GM12878 (cell line): ENCODE measurements at regions of chr11 and their contacts with region 1.

Region 1: DNA sequence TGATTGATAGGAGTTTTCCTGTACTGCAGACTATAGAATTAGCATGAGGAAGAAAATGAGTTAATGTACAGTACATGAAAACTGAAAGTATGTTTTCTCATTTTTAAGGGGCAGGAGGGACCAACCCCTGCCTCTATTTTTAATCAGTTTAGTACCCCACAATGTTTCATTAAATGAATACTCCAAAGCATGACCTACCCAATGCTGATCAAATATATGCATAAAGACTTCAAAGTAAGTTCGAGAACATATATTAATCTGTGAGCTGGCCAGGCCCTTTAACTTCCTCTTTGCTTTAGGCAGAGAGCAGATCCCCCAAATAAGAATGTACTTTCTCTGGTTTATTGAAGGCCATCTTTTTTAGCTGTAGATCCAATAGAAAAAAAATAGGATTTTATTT is 161.0 kb downstream of the FCHSD2 start:
- DNase-seq: no peak
- ATAC-seq: peak; percentile 72
- H3K4me3 ChIP-seq: no peak overlapping the region
- H3K27ac ChIP-seq: peak overlapping the region; percentile 50
- H3K4me1 ChIP-seq: peaks cover 13% of the 10 kb centered on the region; the same call in 1 of the 2 replicates
- H3K27me3 ChIP-seq: no peaks in the 10 kb centered on the region
- CTCF ChIP-seq: no peak
- EP300 ChIP-seq: no peak
- POLR2A ChIP-seq: no peak
- RAD21 ChIP-seq: no peak

Region 2: DNA sequence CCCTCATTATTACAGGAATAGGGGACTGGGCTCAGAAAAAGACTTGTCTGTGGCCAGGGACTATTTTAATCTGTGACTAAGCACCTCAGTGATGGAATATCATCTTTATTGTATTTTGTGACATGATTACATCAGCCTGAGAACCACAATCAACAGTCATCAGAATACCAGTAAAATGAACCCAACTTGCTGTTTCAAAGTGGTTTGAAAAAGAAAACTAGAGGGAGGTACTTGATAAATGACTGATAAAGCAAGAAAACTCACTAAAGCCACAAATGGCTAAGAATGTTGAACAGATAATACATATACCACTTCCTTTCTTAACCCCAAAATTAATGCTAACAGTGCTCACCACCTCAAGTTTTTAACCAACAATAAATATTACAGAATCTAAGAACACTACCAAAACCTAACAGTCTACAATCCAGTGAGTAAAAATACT is 11.2 kb before region 1 on chr11:
- CTCF ChIA-PET with region 1: interaction called, 12 read pairs
- POLR2A ChIA-PET with region 1: interaction called, 3 read pairs
- RAD21 ChIA-PET with region 1: interaction called, 6 read pairs
- SMC1A ChIA-PET with region 1: interaction called, 24 read pairs
- in situ Hi-C with region 1: no loop called
- intact Hi-C with region 1: no loop called
- DNase-seq: peak; percentile 82
- ATAC-seq: peak; percentile 95
- H3K4me3 ChIP-seq: 0 out of 2 replicates have a peak overlapping the region, but pooled peaks have one; percentile 1
- H3K27ac ChIP-seq: peak overlapping the region; percentile 81
- H3K4me1 ChIP-seq: peaks cover 28% of the 10 kb centered on the region
- H3K27me3 ChIP-seq: no peaks in the 10 kb centered on the region
- CTCF ChIP-seq: no peak
- EP300 ChIP-seq: peak; percentile 82
- POLR2A ChIP-seq: no peak
- RAD21 ChIP-seq: peak; percentile 2; the same call in 1 of the 2 replicates

Region 3: GRCh38 chr11:72996959-72997358 is 15.9 kb after region 1 on chr11:
- CTCF ChIA-PET with region 1: no interaction called
- POLR2A ChIA-PET with region 1: no interaction called
- RAD21 ChIA-PET with region 1: interaction called, 3 read pairs
- SMC1A ChIA-PET with region 1: interaction called, 19 read pairs
- in situ Hi-C with region 1: no loop called
- intact Hi-C with region 1: no loop called
- DNase-seq: no peak
- ATAC-seq: peak; percentile 23; the same call in 2 of the 3 replicates
- H3K4me3 ChIP-seq: peak overlapping the region; percentile 2; the same call in 1 of the 2 replicates
- H3K27ac ChIP-seq: 0 out of 2 replicates have a peak overlapping the region, but pooled peaks have one; percentile 30
- H3K4me1 ChIP-seq: peaks cover 4% of the 10 kb centered on the region
- H3K27me3 ChIP-seq: no peaks in the 10 kb centered on the region
- CTCF ChIP-seq: no peak
- EP300 ChIP-seq: no peak
- POLR2A ChIP-seq: no peak
- RAD21 ChIP-seq: no peak

Region 4: DNA sequence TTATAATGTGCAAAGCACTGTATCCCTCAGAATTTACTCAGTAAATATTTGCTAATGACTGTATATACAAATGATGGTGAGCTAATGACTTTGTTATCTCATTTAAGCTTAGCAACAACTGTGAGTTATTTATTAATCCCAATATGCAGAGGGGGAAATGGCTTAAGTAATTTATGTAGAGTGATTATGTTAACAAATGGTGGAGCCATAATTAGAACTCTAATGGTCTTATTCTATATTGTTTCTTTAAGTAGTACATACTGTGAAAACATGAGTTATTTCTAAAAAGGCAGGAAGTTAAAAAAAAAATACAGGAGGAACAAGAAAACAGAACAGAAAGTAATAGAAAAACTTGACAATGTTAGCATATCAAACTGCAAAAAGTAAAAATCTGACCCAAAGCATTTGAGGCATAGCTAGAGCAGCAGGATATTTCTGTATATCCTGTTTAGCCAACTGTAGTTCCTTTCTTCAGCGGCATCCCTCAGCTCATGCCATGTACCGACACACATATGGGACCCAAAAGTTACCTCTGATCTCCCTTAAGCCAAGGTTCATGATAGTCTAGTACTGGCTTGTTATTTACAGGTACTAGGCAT is 66.8 kb after region 1 on chr11:
- CTCF ChIA-PET with region 1: interaction called, 4 read pairs
- POLR2A ChIA-PET with region 1: no interaction called
- RAD21 ChIA-PET with region 1: no interaction called
- SMC1A ChIA-PET with region 1: interaction called, 13 read pairs
- in situ Hi-C with region 1: no loop called
- intact Hi-C with region 1: no loop called
- DNase-seq: peak; percentile 88
- ATAC-seq: peak; percentile 89
- H3K4me3 ChIP-seq: peak overlapping the region; percentile 40; the same call in 1 of the 2 replicates
- H3K27ac ChIP-seq: peak overlapping the region; percentile 95
- H3K4me1 ChIP-seq: peaks cover 44% of the 10 kb centered on the region
- H3K27me3 ChIP-seq: no peaks in the 10 kb centered on the region
- CTCF ChIP-seq: no peak
- EP300 ChIP-seq: peak; percentile 11 to 70; a peak in 1 of 4 replicates
- POLR2A ChIP-seq: 0 out of 2 replicates have a peak, but pooled peaks have one; percentile 29
- RAD21 ChIP-seq: 0 out of 2 replicates have a peak, but pooled peaks have one; percentile 7

Region 5: DNA sequence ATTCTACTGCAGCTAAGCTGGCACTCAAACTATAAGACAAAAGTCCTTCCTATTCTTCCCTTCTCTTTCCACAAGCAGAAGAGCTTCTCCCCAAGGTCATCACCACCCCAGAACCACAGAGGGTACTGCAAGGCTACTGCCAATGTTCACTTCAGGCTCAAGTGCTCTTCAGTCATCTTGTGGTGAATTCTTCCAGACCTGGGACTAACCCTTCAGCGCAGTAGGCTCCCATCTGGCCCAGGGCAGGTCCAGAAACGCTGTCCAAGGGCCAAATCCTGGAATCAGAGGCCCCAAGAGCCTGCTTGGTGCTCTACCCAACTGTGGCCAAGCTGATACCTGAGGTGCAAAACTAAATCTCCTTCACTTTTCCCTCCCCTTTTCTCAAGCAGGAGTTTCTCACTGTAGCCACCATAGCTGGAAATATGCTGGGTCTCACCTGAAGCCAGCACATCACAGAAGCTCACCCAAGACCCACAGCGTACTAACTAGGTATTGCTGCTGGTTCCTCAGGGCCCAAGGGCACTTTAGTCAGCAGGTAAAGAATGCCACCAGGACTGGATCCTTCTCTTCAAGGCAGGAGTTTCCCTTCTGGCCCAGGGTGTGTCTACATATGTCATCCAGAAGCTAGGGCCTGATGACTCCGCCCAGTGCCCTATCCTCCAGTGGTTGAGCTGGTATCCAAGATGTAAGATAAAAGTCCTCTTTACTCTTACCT is 133.2 kb after region 1 on chr11:
- CTCF ChIA-PET with region 1: no interaction called
- POLR2A ChIA-PET with region 1: no interaction called
- RAD21 ChIA-PET with region 1: no interaction called
- SMC1A ChIA-PET with region 1: interaction called, 10 read pairs
- in situ Hi-C with region 1: no loop called
- intact Hi-C with region 1: no loop called
- DNase-seq: no peak
- ATAC-seq: no peak
- H3K4me3 ChIP-seq: no peak overlapping the region
- H3K27ac ChIP-seq: no peak overlapping the region
- H3K4me1 ChIP-seq: no peaks in the 10 kb centered on the region
- H3K27me3 ChIP-seq: no peaks in the 10 kb centered on the region
- CTCF ChIP-seq: no peak
- EP300 ChIP-seq: no peak
- POLR2A ChIP-seq: peak; percentile 39; the same call in 1 of the 2 replicates
- RAD21 ChIP-seq: no peak

Region 6: DNA sequence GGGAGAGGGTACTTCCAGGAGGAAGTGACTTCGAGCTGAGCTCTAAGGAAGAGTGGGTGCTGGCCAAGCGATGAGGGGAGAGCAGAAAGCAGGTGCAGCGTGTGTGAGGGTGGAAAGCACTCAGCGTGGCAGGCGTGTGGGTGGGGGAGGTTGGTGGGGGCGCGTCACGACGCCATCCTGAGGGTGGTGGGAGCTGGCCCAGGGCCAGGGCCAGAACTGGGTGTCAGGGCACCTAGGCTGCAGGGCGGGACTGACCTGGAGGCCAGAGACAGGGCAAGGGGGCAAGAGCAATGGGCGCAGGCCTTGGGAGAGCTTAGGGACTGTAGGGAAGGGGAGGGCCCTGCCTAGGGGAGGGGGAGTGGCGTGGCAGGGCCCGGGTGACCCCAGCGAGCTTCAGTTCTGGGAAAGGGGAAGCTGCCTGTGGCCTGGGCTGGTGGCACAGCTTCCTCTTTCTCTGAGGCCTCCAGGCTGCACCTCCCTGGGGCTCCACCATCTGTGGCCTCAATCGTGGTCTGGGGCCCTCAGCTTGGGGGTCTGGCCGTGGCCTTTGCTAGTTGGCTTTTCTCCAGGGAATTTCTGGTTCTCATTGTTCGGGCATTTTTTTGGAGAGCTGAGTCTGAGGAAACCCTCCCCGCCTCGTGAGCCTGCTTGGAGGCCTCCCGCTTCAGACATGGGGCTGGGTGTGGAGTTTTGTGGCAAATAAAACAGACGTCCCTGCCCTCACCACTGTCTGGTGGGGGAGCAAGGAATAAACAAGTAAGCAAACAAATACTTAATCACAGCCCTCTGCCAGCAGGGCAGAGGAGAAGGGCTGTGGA is 404.0 kb after region 1 on chr11:
- CTCF ChIA-PET with region 1: no interaction called
- POLR2A ChIA-PET with region 1: no interaction called
- RAD21 ChIA-PET with region 1: no interaction called
- SMC1A ChIA-PET with region 1: no interaction called
- in situ Hi-C with region 1: no loop called
- intact Hi-C with region 1: no loop called
- DNase-seq: peak; percentile 69
- ATAC-seq: peak; percentile 73
- H3K4me3 ChIP-seq: peak overlapping the region; percentile 66
- H3K27ac ChIP-seq: peak overlapping the region; percentile 95
- H3K4me1 ChIP-seq: peaks cover 85% of the 10 kb centered on the region
- H3K27me3 ChIP-seq: no peaks in the 10 kb centered on the region
- CTCF ChIP-seq: no peak
- EP300 ChIP-seq: peak; percentile 11 to 67; a peak in 3 of 4 replicates
- POLR2A ChIP-seq: no peak
- RAD21 ChIP-seq: no peak